ENCODE measurements at regions of chr4 and their contacts with region 1.

Region 1: DNA sequence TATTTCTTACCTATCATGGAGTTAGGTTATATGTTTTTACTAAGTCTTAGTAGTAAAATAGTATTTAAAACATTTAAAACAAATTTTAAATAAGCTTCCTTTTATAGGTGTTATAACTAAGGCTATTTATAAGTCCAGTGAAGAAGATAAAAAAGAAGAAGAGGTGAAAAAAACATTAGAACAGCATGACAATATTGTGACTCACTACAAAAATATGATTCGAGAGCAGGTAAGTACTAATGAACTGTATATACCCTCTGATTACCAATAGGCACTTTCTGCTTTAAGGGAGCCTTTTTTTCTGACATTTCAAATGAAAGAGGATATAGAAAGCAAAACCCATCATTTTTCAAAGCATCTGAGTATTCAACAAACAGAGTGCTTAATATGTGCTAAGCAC is 76.6 kb downstream of the USO1 start:
- DNase-seq: no peak
- ATAC-seq: no peak
- H3K4me3 ChIP-seq: no peak overlapping the region
- H3K27ac ChIP-seq: no peak overlapping the region
- H3K4me1 ChIP-seq: no peaks in the 10 kb centered on the region
- H3K27me3 ChIP-seq: no peaks in the 10 kb centered on the region
- CTCF ChIP-seq: no peak
- POLR2A ChIP-seq: no peak

Region 2: GRCh38 chr4:75644095-75644494 is 156.9 kb before region 1 on chr4:
- intact Hi-C with region 1: loop called in 1 of 10 experiments (anchors 10 kb)
- DNase-seq: no peak
- ATAC-seq: no peak
- H3K4me3 ChIP-seq: no peak overlapping the region
- H3K27ac ChIP-seq: no peak overlapping the region
- H3K4me1 ChIP-seq: no peaks in the 10 kb centered on the region
- H3K27me3 ChIP-seq: no peaks in the 10 kb centered on the region
- CTCF ChIP-seq: no peak
- POLR2A ChIP-seq: no peak

Region 3: DNA sequence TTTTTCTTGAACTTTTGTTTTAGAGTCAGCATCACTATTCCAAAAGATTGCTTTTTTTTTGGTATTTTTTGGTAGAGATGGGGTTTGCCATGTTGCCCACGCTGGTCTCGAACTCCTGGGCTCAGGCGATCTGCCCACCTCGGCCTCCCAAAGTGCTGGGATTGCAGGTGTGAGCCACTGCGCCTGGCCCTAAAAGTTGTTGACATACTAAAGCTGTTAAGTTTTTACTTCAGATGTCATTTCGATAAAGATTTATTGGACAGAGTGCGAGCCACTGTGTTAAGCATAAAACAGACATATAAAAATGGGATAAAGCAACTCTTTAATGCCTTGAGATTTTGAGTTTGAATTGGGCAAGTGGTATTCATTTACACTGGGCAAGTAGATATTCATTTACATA is 48.3 kb before region 1 on chr4:
- intact Hi-C with region 1: no loop called
- DNase-seq: no peak
- ATAC-seq: no peak
- H3K4me3 ChIP-seq: no peak overlapping the region
- H3K27ac ChIP-seq: no peak overlapping the region
- H3K4me1 ChIP-seq: no peaks in the 10 kb centered on the region
- H3K27me3 ChIP-seq: no peaks in the 10 kb centered on the region
- CTCF ChIP-seq: no peak
- POLR2A ChIP-seq: no peak

Region 4: GRCh38 chr4:75769036-75769435 is 31.9 kb before region 1 on chr4:
- intact Hi-C with region 1: loop called in 1 of 10 experiments (anchors 5 kb)
- DNase-seq: no peak
- ATAC-seq: no peak
- H3K4me3 ChIP-seq: no peak overlapping the region
- H3K27ac ChIP-seq: no peak overlapping the region
- H3K4me1 ChIP-seq: peaks cover 0 to 10% (median 0%) of the 10 kb centered on the region in 12 donors
- H3K27me3 ChIP-seq: no peaks in the 10 kb centered on the region
- CTCF ChIP-seq: no peak
- POLR2A ChIP-seq: no peak

Region 5: DNA sequence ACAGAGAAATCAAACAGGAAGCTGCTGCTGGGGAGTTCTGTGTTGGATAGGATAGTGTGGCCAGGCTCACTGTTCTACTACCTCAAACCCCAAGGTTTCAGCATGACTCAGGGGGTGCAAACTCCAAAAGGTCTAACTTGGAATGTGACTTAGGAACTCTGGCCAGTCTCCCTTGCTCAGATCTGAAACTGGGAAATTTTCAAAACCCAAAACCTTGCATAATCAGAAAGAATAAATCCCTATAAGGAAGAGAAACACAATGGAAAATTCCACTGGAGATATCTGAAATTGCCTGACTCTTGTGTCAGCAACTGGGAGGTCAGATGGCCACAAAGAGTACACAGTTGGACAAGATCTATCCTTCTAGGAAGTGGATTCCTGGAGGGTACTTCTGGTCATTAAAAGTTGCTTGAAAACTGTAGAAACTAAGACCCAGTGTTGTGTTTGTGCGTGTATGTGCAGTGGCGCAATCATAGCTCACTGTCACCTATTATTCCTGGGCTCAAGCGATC is 43.2 kb after region 1 on chr4:
- intact Hi-C with region 1: no loop called
- DNase-seq: no peak
- ATAC-seq: no peak
- H3K4me3 ChIP-seq: no peak overlapping the region
- H3K27ac ChIP-seq: peak overlapping the region in 3 of 12 donors; percentile 9 to 18 (median 18)
- H3K4me1 ChIP-seq: peaks cover 0 to 19% (median 9%) of the 10 kb centered on the region in 12 donors
- H3K27me3 ChIP-seq: no peaks in the 10 kb centered on the region
- CTCF ChIP-seq: no peak
- POLR2A ChIP-seq: no peak

Region 6: GRCh38 chr4:75869100-75869499 is 68.1 kb after region 1 on chr4:
- intact Hi-C with region 1: no loop called
- DNase-seq: no peak
- ATAC-seq: peak; percentile 37 to 86 (median 66)
- H3K4me3 ChIP-seq: no peak overlapping the region
- H3K27ac ChIP-seq: no peak overlapping the region
- H3K4me1 ChIP-seq: no peaks in the 10 kb centered on the region
- H3K27me3 ChIP-seq: peaks cover 0 to 10% (median 0%) of the 10 kb centered on the region in 9 donors
- CTCF ChIP-seq: no peak
- POLR2A ChIP-seq: no peak

Region 7: GRCh38 chr4:75973766-75974165 is 172.8 kb after region 1 on chr4:
- intact Hi-C with region 1: loop called in 1 of 10 experiments (anchors 10 kb)
- DNase-seq: no peak
- ATAC-seq: no peak
- H3K4me3 ChIP-seq: no peak overlapping the region
- H3K27ac ChIP-seq: no peak overlapping the region
- H3K4me1 ChIP-seq: no peaks in the 10 kb centered on the region
- H3K27me3 ChIP-seq: no peaks in the 10 kb centered on the region
- CTCF ChIP-seq: no peak
- POLR2A ChIP-seq: no peak

Region 8: DNA sequence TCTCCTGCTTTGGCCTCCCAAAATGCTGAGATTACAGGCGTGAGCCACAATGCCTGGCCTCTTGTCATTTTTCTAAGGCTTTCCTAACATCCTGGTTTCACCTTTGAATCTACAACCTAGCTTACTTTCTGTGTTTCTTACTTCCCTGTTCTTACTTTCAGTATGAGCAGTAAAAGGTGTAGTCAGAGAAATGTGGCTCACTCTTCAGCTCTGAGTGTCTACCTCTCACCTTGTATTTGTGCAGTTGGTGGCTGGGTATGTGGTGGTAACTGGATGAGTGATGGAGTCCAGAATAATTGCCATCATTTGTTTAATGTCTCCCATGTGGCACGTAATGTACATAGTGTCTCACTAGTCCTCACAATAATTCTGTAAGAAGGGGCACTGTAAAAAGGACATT is 254.0 kb after region 1 on chr4:
- intact Hi-C with region 1: no loop called
- DNase-seq: no peak
- ATAC-seq: no peak
- H3K4me3 ChIP-seq: no peak overlapping the region
- H3K27ac ChIP-seq: no peak overlapping the region
- H3K4me1 ChIP-seq: peaks cover 0 to 7% (median 0%) of the 10 kb centered on the region in 12 donors
- H3K27me3 ChIP-seq: peaks cover 0 to 15% (median 0%) of the 10 kb centered on the region in 9 donors
- CTCF ChIP-seq: no peak
- POLR2A ChIP-seq: no peak

Measured in heart left ventricle (tissue), 16 donors.